ENCODE measurements at regions of chrX and their contacts with region 1.

Region 1: GRCh38 chrX:154370882-154371770 is 3.3 kb downstream of the FLNA start:
- DNase-seq: peak; percentile 93
- H3K4me3 Mint-ChIP-seq: peak overlapping the region; percentile 75
- H3K27ac Mint-ChIP-seq: peak overlapping the region; percentile 54
- H3K4me1 Mint-ChIP-seq: peaks cover 8% of the 10 kb centered on the region
- H3K27me3 Mint-ChIP-seq: no peaks in the 10 kb centered on the region
- CTCF ChIP-seq: no peak

Region 2: DNA sequence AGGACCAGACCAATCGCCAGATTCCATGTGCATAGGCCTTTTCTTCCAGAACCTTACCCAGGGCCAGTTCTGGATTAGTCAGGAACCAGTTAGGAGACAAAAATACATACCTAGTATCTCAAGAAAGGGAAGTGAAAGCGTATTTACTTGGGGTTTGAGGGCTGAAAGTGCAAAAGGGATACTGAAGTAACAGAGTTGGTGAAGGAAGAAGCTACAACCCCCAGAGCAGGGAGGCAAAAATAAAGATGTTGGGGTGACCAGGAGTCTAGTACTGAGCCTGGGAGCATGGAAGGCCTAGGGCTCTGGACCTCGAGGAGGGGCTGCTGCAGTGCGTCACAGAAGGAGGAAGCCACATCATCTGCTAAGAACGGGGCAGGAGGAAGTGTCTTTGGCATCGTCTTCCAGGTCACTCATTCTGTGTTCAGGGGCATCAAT is 37.3 kb before region 1 on chrX:
- CTCF ChIA-PET with region 1: no interaction called
- POLR2A ChIA-PET with region 1: no interaction called
- intact Hi-C with region 1: no loop called
- DNase-seq: no peak
- H3K4me3 Mint-ChIP-seq: no peak overlapping the region
- H3K27ac Mint-ChIP-seq: no peak overlapping the region
- H3K4me1 Mint-ChIP-seq: no peaks in the 10 kb centered on the region
- H3K27me3 Mint-ChIP-seq: peaks cover 63% of the 10 kb centered on the region
- CTCF ChIP-seq: no peak

Region 3: GRCh38 chrX:154384284-154384892 is 13.3 kb after region 1 on chrX:
- CTCF ChIA-PET with region 1: interaction called, 12 read pairs
- POLR2A ChIA-PET with region 1: interaction called, 16 read pairs
- intact Hi-C with region 1: no loop called
- DNase-seq: no peak
- H3K4me3 Mint-ChIP-seq: no peak overlapping the region
- H3K27ac Mint-ChIP-seq: no peak overlapping the region
- H3K4me1 Mint-ChIP-seq: peaks cover 12% of the 10 kb centered on the region
- H3K27me3 Mint-ChIP-seq: no peaks in the 10 kb centered on the region
- CTCF ChIP-seq: no peak

Region 4: DNA sequence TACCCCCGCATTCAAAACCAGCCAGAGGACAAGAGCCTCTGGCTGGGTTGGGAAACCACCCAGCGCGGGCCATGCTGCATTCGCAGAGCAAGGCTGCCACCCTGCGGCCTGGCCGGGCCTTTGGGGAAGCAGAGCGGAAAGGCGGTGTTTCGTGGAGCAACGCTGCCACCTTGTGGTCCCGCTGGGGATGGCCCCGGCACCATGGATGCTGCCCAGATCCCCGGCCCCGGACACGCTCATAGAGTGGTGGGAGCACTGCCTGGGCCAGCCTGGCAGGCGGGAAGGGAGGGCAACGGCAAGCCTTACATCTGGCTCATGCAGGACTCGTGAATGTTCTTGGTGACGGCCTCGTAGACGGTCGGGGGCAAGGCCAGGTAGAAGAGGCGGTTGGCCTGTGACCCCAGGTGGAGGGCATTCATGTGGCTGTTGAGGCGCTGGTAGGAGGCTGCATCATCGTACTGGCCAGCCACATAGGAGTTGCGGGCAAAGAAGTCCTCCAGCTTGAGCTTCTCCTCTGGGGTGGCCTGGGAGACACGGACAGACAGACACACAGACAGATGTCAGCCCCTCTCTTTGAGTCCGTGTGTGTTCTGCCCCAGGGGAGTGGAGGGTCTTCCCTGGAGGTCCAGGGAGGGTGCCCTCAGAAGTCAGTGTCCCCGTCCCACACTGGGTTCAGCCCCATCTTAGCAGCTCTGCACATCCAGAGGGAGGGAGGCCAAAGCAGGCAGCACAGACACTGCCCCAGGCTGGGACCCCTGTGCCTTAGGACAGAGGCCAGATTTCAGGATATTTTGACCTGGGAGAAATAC is 163.9 kb after region 1 on chrX:
- CTCF ChIA-PET with region 1: interaction called, 54 read pairs
- POLR2A ChIA-PET with region 1: no interaction called
- intact Hi-C with region 1: loop called (anchors 1 kb)
- DNase-seq: peak; percentile 86
- H3K4me3 Mint-ChIP-seq: no peak overlapping the region
- H3K27ac Mint-ChIP-seq: peak overlapping the region; percentile 35
- H3K4me1 Mint-ChIP-seq: no peaks in the 10 kb centered on the region
- H3K27me3 Mint-ChIP-seq: no peaks in the 10 kb centered on the region
- CTCF ChIP-seq: peak; percentile 100

Region 5: GRCh38 chrX:154986826-154987576 is 615.9 kb after region 1 on chrX:
- CTCF ChIA-PET with region 1: no interaction called
- POLR2A ChIA-PET with region 1: no interaction called
- intact Hi-C with region 1: no loop called
- DNase-seq: no peak
- H3K4me3 Mint-ChIP-seq: no peak overlapping the region
- H3K27ac Mint-ChIP-seq: no peak overlapping the region
- H3K4me1 Mint-ChIP-seq: no peaks in the 10 kb centered on the region
- H3K27me3 Mint-ChIP-seq: peaks cover 18% of the 10 kb centered on the region
- CTCF ChIP-seq: peak; percentile 20